A673 (cell line): ENCODE measurements at regions of chr20 and their contacts with region 1.

Region 1: DNA sequence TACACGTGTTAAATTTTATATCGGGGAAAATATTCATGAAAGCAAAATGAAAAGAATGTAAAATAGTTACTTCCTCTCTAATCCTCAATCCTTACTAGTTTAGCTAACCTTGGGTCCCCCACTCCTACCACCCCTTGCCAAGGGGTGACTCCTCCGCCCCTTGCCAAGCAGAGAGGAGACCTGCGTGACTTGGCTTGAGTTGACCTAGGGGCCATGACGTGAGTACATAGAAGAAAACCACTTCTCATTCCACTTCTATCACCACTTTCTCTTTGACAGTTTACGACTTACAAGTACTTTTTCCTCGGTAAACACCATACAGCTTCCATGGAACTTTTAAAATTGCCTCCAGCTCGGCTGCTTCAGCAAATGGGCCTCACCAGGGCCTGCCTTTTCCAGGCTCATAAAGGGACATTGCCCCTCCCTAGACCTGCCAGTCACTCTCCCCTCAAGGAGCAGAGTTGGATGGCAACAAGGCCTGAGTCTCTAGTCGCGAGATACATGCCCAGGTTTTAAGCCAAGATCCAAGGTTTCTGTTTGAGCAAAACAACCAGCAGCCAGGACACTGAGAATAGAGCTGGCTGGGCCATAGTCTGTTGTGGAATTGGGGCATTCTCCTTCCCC is 29.9 kb downstream of the SDCBP2 start:
- DNase-seq: no peak
- H3K4me3 ChIP-seq: no peak overlapping the region
- H3K27ac ChIP-seq: no peak overlapping the region
- H3K4me1 ChIP-seq: no peaks in the 10 kb centered on the region
- H3K27me3 ChIP-seq: no peaks in the 10 kb centered on the region
- CTCF ChIP-seq: no peak

Region 2: DNA sequence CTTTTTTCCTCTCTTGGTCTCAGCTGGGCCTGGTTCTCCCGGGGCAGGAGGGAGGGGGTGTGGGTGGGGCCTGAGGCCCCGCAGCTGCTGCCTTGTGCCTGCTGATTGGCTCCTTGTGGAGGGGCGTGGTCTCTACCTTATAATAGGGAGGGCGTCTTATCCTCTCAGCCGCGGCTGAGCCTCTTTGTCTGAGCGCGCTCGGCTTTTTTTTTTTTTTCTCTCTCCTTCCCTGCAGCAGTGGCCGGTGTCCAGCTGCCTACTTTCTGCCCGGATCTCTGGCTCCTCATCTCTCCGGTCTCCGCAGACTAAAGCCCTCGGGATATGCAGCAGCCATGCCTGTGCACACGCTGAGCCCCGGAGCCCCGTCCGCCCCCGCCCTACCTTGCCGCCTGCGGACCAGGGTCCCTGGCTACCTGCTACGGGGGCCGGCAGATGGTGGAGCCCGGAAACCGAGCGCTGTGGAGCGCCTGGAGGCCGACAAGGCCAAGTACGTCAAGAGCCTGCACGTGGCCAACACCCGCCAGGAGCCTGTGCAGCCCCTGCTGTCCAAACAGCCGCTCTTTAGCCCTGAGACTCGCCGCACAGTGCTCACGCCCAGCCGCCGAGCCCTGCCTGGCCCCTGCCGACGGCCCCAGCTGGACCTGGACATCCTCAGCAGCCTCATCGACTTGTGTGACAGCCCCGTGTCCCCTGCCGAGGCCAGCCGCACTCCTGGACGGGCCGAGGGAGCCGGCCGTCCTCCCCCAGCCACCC is 454.4 kb before region 1 on chr20:
- CTCF ChIA-PET with region 1: no interaction called
- POLR2A ChIA-PET with region 1: no interaction called
- intact Hi-C with region 1: no loop called
- DNase-seq: peak; percentile 95
- H3K4me3 ChIP-seq: peak overlapping the region; percentile 54
- H3K27ac ChIP-seq: peak overlapping the region; percentile 75
- H3K4me1 ChIP-seq: peaks cover 43% of the 10 kb centered on the region
- H3K27me3 ChIP-seq: no peaks in the 10 kb centered on the region
- CTCF ChIP-seq: no peak

Region 3: DNA sequence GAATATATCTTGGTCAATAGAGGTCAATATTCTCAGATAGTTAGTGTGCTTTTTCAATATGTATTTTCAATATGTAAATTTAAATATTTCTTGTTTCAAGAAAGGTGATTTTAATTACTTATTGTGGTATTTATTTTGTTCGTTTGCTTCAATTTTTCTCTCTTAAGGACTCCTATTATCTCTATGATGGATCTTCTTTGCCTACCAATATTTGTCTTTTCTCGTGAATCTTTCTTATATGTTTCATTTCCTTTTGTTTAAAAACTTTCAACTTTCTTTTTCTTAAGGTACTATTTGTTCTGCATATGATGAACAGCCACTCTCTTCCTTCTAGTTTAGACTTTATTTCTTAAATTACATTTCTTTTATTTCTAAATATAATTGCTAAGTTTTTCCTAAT is 226.7 kb before region 1 on chr20:
- CTCF ChIA-PET with region 1: no interaction called
- POLR2A ChIA-PET with region 1: no interaction called
- intact Hi-C with region 1: no loop called
- DNase-seq: no peak
- H3K4me3 ChIP-seq: no peak overlapping the region
- H3K27ac ChIP-seq: no peak overlapping the region
- H3K4me1 ChIP-seq: no peaks in the 10 kb centered on the region
- H3K27me3 ChIP-seq: peaks cover 20% of the 10 kb centered on the region
- CTCF ChIP-seq: no peak

Region 4: GRCh38 chr20:1177680-1178079 is 121.3 kb before region 1 on chr20:
- CTCF ChIA-PET with region 1: no interaction called
- POLR2A ChIA-PET with region 1: no interaction called
- intact Hi-C with region 1: no loop called
- DNase-seq: no peak
- H3K4me3 ChIP-seq: no peak overlapping the region
- H3K27ac ChIP-seq: no peak overlapping the region
- H3K4me1 ChIP-seq: no peaks in the 10 kb centered on the region
- H3K27me3 ChIP-seq: peaks cover under 1% of the 10 kb centered on the region
- CTCF ChIP-seq: no peak

Region 5: GRCh38 chr20:1313236-1313964 is 14.4 kb after region 1 on chr20:
- CTCF ChIA-PET with region 1: interaction called, 12 read pairs
- POLR2A ChIA-PET with region 1: no interaction called
- intact Hi-C with region 1: no loop called
- DNase-seq: peak; percentile 87
- H3K4me3 ChIP-seq: no peak overlapping the region
- H3K27ac ChIP-seq: peak overlapping the region; percentile 1
- H3K4me1 ChIP-seq: peaks cover 5% of the 10 kb centered on the region
- H3K27me3 ChIP-seq: no peaks in the 10 kb centered on the region
- CTCF ChIP-seq: peak; percentile 96

Region 6: DNA sequence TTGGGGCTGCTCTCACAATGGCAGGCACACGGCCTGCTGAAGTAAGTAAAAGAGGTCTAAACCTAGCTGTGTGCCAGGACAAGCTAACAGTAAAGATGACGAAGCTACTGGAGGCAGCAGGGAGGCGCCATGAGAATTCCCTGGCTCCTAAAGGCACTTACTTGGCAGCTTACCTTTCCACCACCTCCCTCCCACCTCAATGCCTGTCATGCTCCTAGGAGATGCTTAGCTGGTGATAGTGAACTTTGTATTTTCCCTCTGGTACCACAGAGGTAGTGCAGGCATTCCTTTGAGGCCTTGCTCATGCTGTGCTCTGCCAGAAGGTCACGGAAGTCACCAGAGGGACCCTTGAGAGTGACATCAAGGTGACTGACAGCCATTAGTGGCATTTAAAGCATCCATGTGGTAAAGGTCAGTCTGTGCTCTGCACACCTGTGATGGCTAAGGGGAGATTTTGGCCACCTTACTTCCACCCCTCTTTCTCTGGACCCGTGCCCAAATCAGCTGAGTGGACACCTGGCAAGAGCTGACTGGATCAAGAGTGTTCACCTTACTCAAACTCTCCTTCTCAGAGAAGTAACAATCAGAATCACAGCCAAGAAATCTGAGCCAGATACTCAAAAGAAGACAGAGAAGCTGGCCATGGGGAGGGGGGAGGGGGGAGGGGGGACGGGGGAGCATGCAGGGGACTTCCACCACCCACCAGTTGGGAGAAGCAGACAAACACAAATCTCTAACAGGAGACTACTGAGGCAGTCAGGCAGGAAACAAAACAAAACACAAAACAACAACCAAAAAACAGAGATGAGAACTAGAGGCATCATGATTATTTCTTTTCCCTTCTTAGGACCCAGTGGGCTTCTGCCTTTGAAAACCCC is 90.9 kb after region 1 on chr20:
- CTCF ChIA-PET with region 1: no interaction called
- POLR2A ChIA-PET with region 1: no interaction called
- intact Hi-C with region 1: no loop called
- DNase-seq: no peak
- H3K4me3 ChIP-seq: peak overlapping the region; percentile 97
- H3K27ac ChIP-seq: peak overlapping the region; percentile 81
- H3K4me1 ChIP-seq: peaks cover 38% of the 10 kb centered on the region
- H3K27me3 ChIP-seq: no peaks in the 10 kb centered on the region
- CTCF ChIP-seq: no peak